ENCODE measurements at regions of chr15 and their contacts with region 1.

Region 1: GRCh38 chr15:90665288-90666134 is 51.6 kb upstream of the BLM start:
- DNase-seq: peak; percentile 40 to 69
- H3K4me3 ChIP-seq: peak overlapping the region; percentile 75
- H3K27ac ChIP-seq: peak overlapping the region; percentile 56
- H3K4me1 ChIP-seq: peaks cover 37% of the 10 kb centered on the region
- H3K27me3 ChIP-seq: no peaks in the 10 kb centered on the region
- CTCF ChIP-seq: no peak

Region 2: GRCh38 chr15:92636908-92637481 is 1971.5 kb after region 1 on chr15:
- CTCF ChIA-PET with region 1: no interaction called
- POLR2A ChIA-PET with region 1: no interaction called
- intact Hi-C with region 1: loop called (anchors 5 kb)
- DNase-seq: peak; percentile 87 to 96
- H3K4me3 ChIP-seq: peak overlapping the region; percentile 47; the same call in 1 of the 2 replicates
- H3K27ac ChIP-seq: peak overlapping the region; percentile 98
- H3K4me1 ChIP-seq: peaks cover 63% of the 10 kb centered on the region
- H3K27me3 ChIP-seq: no peaks in the 10 kb centered on the region
- CTCF ChIP-seq: no peak

Measured in PC-9 (cell line).